Naive thymus-derived CD4-positive, alpha-beta T cell (primary cell): ENCODE measurements at regions of chr6 and their contacts with region 1.

Region 1: GRCh38 chr6:10722820-10723566 is at the start of gene TMEM14C:
- DNase-seq: peak; percentile 48 to 93 (median 61)
- ATAC-seq: peak; percentile 86
- H3K4me3 ChIP-seq: peak within 1 kb of the TSS; percentile 82
- H3K4me3 Mint-ChIP-seq: peak within 1 kb of the TSS; percentile 91 to 98 (median 96)
- H3K27ac ChIP-seq: peak within 1 kb of the TSS; percentile 76
- H3K27ac Mint-ChIP-seq: peak within 1 kb of the TSS; percentile 89 to 97 (median 94)
- H3K4me1 ChIP-seq: peaks cover 14 to 15% of the 10 kb centered on the region in 2 donors
- H3K4me1 Mint-ChIP-seq: peaks cover 27 to 62% (median 53%) of the 10 kb centered on the region in 7 donors
- H3K27me3 ChIP-seq: no peaks in the 10 kb centered on the region
- H3K27me3 Mint-ChIP-seq: no peaks in the 10 kb centered on the region
- total RNA-seq, gene TMEM14C: 20.2 to 64.3 (median 25.0) TPM

Region 2: DNA sequence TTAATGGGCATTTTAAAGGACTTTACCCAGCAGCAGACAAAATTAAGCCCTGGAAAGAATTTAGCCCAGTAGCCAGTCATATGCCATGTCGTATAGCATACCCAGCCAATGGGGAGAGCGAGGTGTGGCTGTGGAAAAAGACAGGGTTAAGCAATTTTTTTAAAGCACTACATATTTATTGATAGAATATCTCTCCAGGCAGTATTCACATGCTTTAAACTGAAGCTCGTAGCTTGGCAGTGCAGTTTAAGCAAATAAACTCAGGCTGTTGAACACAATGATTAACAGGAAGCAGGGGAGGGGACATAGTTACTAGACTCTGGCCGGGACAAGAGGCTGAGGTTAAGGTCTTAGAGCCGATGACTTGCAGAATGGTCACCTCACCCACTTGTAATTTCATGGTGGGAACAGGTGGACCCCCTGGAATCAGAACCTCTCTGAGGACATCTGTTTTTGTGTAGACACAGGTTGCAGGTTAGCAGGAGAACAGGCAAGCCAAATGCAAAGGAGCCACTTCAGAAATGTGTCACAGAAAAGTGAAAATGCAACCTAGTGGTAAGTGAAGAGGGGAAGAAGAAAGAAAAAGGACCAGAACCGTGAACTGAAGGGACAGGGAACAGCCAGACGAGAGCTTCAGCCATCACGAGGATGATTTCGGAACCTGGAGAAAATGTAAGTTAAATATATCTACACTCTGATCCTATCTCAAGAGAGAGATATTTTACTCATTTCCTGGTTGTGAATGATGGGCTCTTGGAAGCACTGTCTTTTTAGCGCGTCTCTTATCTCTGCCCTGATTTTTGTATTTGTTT is 194.6 kb before region 1 on chr6:
- CTCF ChIA-PET with region 1: no interaction called
- POLR2A ChIA-PET with region 1: interaction called, 5 read pairs
- intact Hi-C with region 1: loop called in 1 of 2 experiments (anchors 1 kb)
- DNase-seq: peak in 6 of 9 donors; percentile 13 to 36 (median 27)
- ATAC-seq: peak; percentile 70
- H3K4me3 ChIP-seq: peak overlapping the region; percentile 70
- H3K4me3 Mint-ChIP-seq: peak overlapping the region; percentile 87 to 98 (median 94)
- H3K27ac ChIP-seq: peak overlapping the region; percentile 69
- H3K27ac Mint-ChIP-seq: peak overlapping the region; percentile 74 to 95 (median 90)
- H3K4me1 ChIP-seq: peaks cover 10 to 15% of the 10 kb centered on the region in 2 donors
- H3K4me1 Mint-ChIP-seq: peaks cover 32 to 52% (median 44%) of the 10 kb centered on the region in 7 donors
- H3K27me3 ChIP-seq: no peaks in the 10 kb centered on the region
- H3K27me3 Mint-ChIP-seq: peaks cover 0 to 5% (median 0%) of the 10 kb centered on the region in 5 donors

Region 3: DNA sequence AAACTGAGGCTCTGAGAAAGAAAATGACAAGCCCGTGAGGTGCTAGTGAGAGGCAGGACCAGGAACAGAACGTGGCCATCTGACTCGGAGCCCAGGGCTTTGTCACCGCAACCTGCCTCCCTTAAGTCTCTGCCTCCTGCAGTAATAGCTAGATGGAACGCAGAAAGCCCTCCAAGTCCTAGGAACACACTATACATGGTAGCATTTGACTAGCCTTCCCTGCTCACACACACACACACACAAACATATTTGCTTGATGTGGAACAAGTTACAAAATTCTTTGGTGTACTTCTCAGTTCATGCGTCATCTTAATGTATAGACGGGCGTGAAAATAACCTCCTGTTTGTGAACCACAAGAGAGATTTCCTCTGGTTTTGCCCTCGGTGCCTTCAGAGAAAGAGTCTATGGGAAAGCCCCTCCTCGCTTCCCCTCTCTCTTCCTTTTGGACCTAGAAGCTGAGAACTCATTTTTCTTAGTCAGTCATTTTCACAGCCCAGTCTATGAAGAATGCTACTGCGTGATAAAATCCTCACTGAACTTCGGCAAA is 67.4 kb before region 1 on chr6:
- CTCF ChIA-PET with region 1: no interaction called
- POLR2A ChIA-PET with region 1: no interaction called
- intact Hi-C with region 1: loop called in 1 of 2 experiments (anchors 2 kb)
- DNase-seq: peak in 6 of 9 donors; percentile 3 to 32 (median 20)
- ATAC-seq: peak; percentile 63
- H3K4me3 ChIP-seq: no peak overlapping the region
- H3K4me3 Mint-ChIP-seq: peak overlapping the region in 4 of 10 donors; percentile 4 to 71 (median 38)
- H3K27ac ChIP-seq: no peak overlapping the region
- H3K27ac Mint-ChIP-seq: peak overlapping the region in 1 of 9 donors; percentile 20
- H3K4me1 ChIP-seq: peaks cover 5 to 8% of the 10 kb centered on the region in 2 donors
- H3K4me1 Mint-ChIP-seq: peaks cover 0 to 21% (median 11%) of the 10 kb centered on the region in 7 donors
- H3K27me3 ChIP-seq: no peaks in the 10 kb centered on the region
- H3K27me3 Mint-ChIP-seq: peaks cover 9 to 50% (median 32%) of the 10 kb centered on the region in 5 donors

Region 4: GRCh38 chr6:10837995-10838793 is 115.2 kb after region 1 on chr6 and contains the start of gene MAK:
- CTCF ChIA-PET with region 1: no interaction called
- POLR2A ChIA-PET with region 1: no interaction called
- intact Hi-C with region 1: loop called in 1 of 2 experiments (anchors 1 kb)
- DNase-seq: peak; percentile 80 to 93 (median 86)
- ATAC-seq: peak; percentile 98
- H3K4me3 ChIP-seq: peak within 1 kb of the TSS; percentile 59
- H3K4me3 Mint-ChIP-seq: peak within 1 kb of the TSS; percentile 71 to 89 (median 78)
- H3K27ac ChIP-seq: no peak within 1 kb of the TSS
- H3K27ac Mint-ChIP-seq: peak within 1 kb of the TSS in 4 of 9 donors; percentile 21 to 87 (median 55)
- H3K4me1 ChIP-seq: peaks cover 14 to 20% of the 10 kb centered on the region in 2 donors
- H3K4me1 Mint-ChIP-seq: peaks cover 10 to 22% (median 19%) of the 10 kb centered on the region in 7 donors
- H3K27me3 ChIP-seq: peaks cover 23 to 29% of the 10 kb centered on the region in 2 donors
- H3K27me3 Mint-ChIP-seq: peaks cover 52 to 65% (median 61%) of the 10 kb centered on the region in 5 donors
- total RNA-seq, gene MAK: 0.34 to 0.42 TPM in 2 of 5 experiments, not detected in the others